H1 (cell line): ENCODE measurements at regions of chr5 and their contacts with region 1.

Region 1: DNA sequence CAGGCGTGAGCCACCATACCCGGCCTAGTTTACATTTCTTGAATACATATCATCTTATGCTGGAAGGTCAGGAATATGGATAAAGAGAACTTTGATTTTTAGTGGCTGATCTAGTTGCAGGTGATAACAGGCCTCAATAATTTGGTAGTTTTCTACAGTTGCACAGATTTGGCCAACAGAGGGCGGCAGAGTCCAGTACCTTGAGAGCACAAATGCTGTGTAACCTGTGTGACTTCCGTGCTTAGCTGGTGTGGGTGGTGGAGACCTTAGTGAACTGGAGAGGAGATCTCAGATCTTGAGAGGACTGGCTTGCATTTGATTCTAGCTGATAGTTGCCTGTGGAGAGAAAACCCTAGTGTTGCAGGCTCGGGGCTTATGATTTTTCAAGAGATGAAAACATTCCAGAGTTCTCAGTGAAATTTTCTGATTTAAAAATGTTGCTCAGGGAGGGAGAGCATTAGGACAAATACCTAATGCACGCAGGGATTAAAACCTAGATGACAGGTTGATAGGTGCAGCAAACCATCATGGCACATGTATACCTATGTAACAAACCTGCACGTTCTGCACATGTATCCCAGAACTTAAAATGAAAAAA is 17.4 kb upstream of the GPR151 start:
- DNase-seq: peak; percentile 60 to 84
- H3K4me3 ChIP-seq: no peak overlapping the region
- H3K27ac ChIP-seq: no peak overlapping the region
- H3K4me1 ChIP-seq: peaks cover 0 to 7% (median 3%) of the 10 kb centered on the region in 4 experiments; a peak in 4 of 7 replicates
- H3K27me3 ChIP-seq: no peaks in the 10 kb centered on the region
- CTCF ChIP-seq: peak; percentile 61 to 92 (median 82)
- EP300 ChIP-seq: no peak
- POLR2A ChIP-seq: no peak
- RAD21 ChIP-seq: peak; percentile 92 to 93

Region 2: GRCh38 chr5:146426853-146427618 is 106.3 kb before region 1 on chr5:
- CTCF ChIA-PET with region 1: no interaction called
- POLR2A ChIA-PET with region 1: no interaction called
- DNase-seq: no peak
- H3K4me3 ChIP-seq: no peak overlapping the region
- H3K27ac ChIP-seq: no peak overlapping the region
- H3K4me1 ChIP-seq: no peaks in the 10 kb centered on the region; a peak in 1 of 7 replicates
- H3K27me3 ChIP-seq: no peaks in the 10 kb centered on the region; a peak in 1 of 7 replicates
- CTCF ChIP-seq: peak in 2 of 3 experiments; percentile 59 to 68; a peak in 2 of 4 replicates
- EP300 ChIP-seq: no peak
- POLR2A ChIP-seq: no peak
- RAD21 ChIP-seq: peak; percentile 89

Region 3: DNA sequence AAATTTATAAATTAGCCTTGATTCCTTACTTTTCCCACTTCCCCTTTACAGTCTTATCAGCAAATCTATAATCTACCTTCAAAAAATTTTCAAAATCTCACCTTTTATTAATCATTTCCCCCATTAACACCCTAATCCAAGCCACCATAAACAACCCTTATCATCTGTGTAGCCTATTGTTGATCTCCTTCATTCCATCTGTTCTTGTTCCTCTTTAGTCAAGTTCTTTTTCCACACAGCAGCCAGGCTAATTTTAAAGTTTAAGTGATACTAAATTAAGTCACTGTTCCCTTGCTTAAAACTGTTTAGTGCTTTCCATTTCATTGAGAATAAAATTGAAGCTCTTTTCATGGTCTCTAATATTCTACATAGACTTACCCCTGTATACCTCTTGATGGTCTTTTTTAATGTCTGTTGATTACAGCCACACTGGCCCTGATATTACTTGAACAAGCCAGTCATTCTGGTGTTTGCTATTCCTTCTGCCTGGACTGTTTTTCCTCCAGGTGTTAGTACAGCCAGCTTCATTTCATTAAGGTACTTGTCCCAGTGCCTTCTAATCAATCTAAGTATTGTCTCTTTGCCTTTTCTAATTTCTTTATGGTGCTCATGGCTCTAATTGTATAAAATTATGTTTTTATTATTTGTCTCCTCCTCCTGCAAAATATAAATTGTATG is 48.5 kb before region 1 on chr5:
- CTCF ChIA-PET with region 1: no interaction called
- POLR2A ChIA-PET with region 1: no interaction called
- DNase-seq: no peak
- H3K4me3 ChIP-seq: no peak overlapping the region
- H3K27ac ChIP-seq: no peak overlapping the region
- H3K4me1 ChIP-seq: no peaks in the 10 kb centered on the region
- H3K27me3 ChIP-seq: no peaks in the 10 kb centered on the region
- CTCF ChIP-seq: no peak
- EP300 ChIP-seq: no peak
- POLR2A ChIP-seq: no peak
- RAD21 ChIP-seq: no peak

Region 4: GRCh38 chr5:146516151-146516475 is 17.2 kb before region 1 on chr5 and contains the start of gene GPR151:
- CTCF ChIA-PET with region 1: interaction called, 29 read pairs
- POLR2A ChIA-PET with region 1: no interaction called
- DNase-seq: no peak
- H3K4me3 ChIP-seq: no peak within 1 kb of the TSS
- H3K27ac ChIP-seq: no peak within 1 kb of the TSS
- H3K4me1 ChIP-seq: peaks cover 0 to 4% (median 0%) of the 10 kb centered on the region in 4 experiments; a peak in 1 of 7 replicates
- H3K27me3 ChIP-seq: no peaks in the 10 kb centered on the region
- CTCF ChIP-seq: no peak
- EP300 ChIP-seq: no peak
- POLR2A ChIP-seq: no peak
- RAD21 ChIP-seq: no peak
- total RNA-seq, gene GPR151: not detected in 2 replicates